ENCODE measurements at regions of chr3 and their contacts with region 1.

Region 1: DNA sequence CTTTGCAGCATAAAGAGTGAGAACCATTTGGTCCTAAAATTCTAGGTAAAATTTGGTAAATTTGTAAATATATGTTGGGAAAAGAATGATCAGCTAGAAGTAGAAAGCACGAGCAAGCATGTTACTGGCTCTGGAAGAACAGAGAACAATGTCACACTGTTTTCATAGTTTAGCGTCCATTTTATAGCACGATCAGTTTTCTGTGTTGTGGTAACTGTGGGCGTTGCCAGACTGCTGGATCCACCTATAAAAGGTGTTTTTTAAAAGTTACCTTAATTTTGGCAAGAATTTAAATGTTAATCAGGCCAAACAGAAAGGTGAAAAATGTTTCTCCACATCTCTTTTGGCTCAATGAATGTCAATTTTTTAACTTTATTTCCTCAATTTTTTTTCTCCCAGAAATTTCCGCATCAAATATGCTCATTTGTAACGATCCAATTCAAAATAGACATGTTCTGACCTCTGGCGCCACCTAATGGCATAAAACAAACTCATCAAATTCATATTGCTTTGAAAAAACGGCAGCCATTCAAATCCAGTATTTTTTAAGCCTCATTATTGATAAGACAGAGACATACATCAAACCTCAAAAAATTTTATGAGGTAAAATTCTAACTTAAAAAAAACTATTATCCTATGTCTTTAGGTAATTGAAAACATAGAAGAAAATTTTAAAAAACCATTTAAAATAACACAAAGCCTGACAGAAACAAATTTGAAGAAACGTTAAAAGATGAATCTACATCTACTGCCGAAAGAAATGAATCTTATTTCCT is 5.5 kb upstream of the GP5 start:
- DNase-seq: peak; percentile 61
- H3K4me3 ChIP-seq: no peak overlapping the region
- H3K27ac ChIP-seq: no peak overlapping the region
- H3K4me1 ChIP-seq: no peaks in the 10 kb centered on the region
- H3K27me3 ChIP-seq: no peaks in the 10 kb centered on the region
- CTCF ChIP-seq: peak; percentile 29 to 79 (median 72)
- POLR2A ChIP-seq: no peak

Region 2: DNA sequence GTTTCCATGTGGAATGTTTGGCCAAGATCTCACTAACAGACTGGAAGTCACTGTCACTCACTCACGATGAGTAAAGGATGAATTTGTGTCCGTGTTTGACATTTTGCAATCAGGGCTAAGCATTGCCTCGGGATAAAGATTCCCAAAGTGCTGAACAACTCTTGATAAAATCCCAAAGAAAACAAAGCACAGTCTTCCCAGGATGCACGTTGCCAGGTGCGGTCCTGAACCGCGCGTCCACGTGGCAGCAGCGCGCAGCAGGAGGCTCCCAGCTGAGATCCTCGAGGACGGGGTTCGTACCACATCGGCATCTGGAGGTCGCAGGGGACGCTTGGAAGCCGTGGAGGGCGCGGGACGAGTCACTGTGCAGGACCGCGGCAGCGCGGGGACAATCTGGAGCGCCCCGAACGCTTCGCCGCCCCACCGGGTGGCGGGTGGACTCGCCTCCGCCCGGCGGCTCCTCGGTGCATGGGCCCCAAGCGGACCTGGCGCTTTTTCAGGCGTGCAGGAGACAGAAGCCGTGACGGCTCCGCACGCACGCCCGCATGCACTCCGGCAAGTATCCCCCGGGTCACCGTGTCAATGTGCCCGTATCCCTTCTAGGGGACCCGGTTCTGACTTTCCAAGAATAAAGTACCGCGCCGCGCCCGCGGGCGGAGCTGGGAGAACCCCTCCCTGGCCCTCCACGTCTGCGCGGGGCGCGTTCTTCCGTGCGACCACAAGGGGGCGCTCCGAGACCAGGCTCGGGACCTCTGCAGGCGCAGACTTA is 71.2 kb before region 1 on chr3:
- intact Hi-C with region 1: loop called (anchors 1 kb)
- DNase-seq: peak; percentile 85
- H3K4me3 ChIP-seq: peak overlapping the region; percentile 24 to 39
- H3K27ac ChIP-seq: no peak overlapping the region
- H3K4me1 ChIP-seq: peaks cover 5% of the 10 kb centered on the region
- H3K27me3 ChIP-seq: no peaks in the 10 kb centered on the region
- CTCF ChIP-seq: peak; percentile 93 to 99 (median 98)
- POLR2A ChIP-seq: no peak

Measured in prostate gland (tissue), 2 donors.